K562 (cell line): ENCODE measurements at regions of chr10 and their contacts with region 1.

Region 1: DNA sequence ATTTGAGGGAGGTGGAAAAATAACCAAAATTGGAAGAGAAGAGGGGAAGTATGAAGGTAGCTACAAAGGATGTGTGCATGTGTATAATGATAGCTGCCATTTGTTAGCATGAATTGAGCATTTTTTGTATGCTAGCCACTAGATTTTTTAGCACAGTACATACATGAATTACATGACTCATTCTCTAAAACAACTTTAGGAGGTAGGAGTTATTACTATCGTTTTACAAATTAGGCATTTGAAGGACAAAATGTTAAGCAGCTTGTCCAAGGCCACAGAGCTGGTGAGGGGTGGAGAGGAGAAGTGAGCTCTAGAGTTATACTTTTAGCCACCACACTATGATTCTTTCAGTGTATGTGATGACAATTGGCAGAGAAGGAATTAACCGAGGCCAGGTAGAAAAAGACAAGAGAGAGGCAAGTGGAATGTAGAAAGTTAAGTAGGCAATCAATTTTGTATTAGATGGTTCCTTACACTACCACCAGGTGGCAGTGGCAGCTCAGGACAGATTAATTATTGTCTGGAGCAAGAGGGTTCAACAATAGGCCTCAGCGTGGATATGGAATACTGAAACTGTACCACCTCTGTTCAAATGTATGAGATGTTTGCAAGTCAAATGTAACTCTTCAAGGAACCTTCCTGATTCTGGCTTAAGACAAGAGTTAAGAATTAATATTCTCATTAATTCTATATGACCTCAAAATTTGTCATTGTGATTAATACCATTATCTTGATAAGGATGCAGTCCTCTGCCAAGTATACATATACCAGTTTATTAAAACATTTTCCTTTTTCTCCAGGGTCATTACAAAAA is 128.0 kb downstream of the MBL2 start:
- DNase-seq: peak; percentile 11 to 26 (median 22)
- ATAC-seq: no peak
- H3K4me3 ChIP-seq: no peak overlapping the region
- H3K27ac ChIP-seq: no peak overlapping the region
- H3K4me1 ChIP-seq: no peaks in the 10 kb centered on the region
- H3K27me3 ChIP-seq: no peaks in the 10 kb centered on the region
- CTCF ChIP-seq: peak; percentile 14 to 48 (median 47); a peak in 3 of 6 replicates
- EP300 ChIP-seq: no peak
- POLR2A ChIP-seq: no peak
- RAD21 ChIP-seq: peak; percentile 41 to 54; a peak in 3 of 4 replicates

Region 2: DNA sequence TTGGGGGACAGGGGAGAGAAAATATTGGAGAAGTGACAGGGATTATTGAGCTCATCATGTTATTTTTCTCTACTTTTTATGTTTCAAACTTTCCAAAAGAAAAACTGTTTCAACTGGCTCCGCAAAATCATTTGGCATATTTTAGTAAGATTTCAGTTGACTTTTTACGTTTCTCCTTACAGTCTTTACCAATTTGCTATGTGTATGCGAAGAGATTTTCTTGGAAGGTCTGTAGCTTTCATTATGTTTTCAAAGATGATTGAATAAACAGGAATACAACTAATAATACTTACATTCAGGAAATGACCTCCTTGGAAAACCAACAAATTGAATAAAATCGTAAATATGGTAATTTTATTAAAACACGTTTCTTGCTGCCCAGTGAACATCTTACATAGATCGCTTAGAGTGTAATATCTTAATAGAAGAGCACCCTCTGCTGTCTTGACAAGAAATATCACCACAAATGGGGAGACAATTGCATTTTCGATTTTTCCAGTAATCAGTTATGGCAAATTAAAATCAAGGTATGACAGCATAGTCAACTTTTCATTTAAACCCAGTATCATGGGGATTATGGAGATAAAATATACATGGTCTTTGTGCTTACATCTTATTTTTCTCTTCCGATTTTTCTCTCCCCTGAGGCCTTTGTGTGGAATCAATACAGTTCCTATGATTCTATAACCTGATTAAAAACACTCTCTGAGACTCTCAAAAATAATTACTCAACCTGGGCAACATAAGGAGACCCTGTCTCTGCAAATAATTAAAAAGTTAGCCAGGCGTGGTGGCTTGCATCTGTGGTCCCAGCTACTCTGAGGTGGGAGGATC is 84.9 kb after region 1 on chr10:
- CTCF ChIA-PET with region 1: no interaction called
- POLR2A ChIA-PET with region 1: no interaction called
- in situ Hi-C with region 1: no loop called
- intact Hi-C with region 1: loop called (anchors 10 kb)
- DNase-seq: no peak
- ATAC-seq: no peak
- H3K4me3 ChIP-seq: no peak overlapping the region
- H3K27ac ChIP-seq: no peak overlapping the region
- H3K4me1 ChIP-seq: no peaks in the 10 kb centered on the region
- H3K27me3 ChIP-seq: no peaks in the 10 kb centered on the region
- CTCF ChIP-seq: peak in 2 of 3 experiments; percentile 16 to 35; a peak in 2 of 6 replicates
- EP300 ChIP-seq: no peak
- POLR2A ChIP-seq: no peak
- RAD21 ChIP-seq: peak; percentile 24 to 45; a peak in 2 of 4 replicates